Activated CD8-positive, alpha-beta T cell treated with anti-CD3 and anti-CD28 coated beads, Interleukin-2, amount 10 ng/mL, durations not matched to agents 7 days and 5 days (primary cell): ENCODE measurements at regions of chr3 and their contacts with region 1.

Region 1: GRCh38 chr3:66276705-66277274 is 56.0 kb downstream of the SLC25A26 start:
- DNase-seq: peak; percentile 74
- ATAC-seq: no peak
- H3K4me3 Mint-ChIP-seq: no peak overlapping the region
- H3K27ac Mint-ChIP-seq: no peak overlapping the region
- H3K4me1 Mint-ChIP-seq: peaks cover 16% of the 10 kb centered on the region
- H3K27me3 Mint-ChIP-seq: no peaks in the 10 kb centered on the region

Region 2: GRCh38 chr3:66372681-66373350 is 96.0 kb after region 1 on chr3:
- CTCF ChIA-PET with region 1: interaction called, 25 read pairs
- POLR2A ChIA-PET with region 1: interaction called, 3 read pairs
- DNase-seq: no peak
- ATAC-seq: no peak
- H3K4me3 Mint-ChIP-seq: no peak overlapping the region
- H3K27ac Mint-ChIP-seq: no peak overlapping the region
- H3K4me1 Mint-ChIP-seq: peaks cover 2% of the 10 kb centered on the region
- H3K27me3 Mint-ChIP-seq: no peaks in the 10 kb centered on the region

Region 3: DNA sequence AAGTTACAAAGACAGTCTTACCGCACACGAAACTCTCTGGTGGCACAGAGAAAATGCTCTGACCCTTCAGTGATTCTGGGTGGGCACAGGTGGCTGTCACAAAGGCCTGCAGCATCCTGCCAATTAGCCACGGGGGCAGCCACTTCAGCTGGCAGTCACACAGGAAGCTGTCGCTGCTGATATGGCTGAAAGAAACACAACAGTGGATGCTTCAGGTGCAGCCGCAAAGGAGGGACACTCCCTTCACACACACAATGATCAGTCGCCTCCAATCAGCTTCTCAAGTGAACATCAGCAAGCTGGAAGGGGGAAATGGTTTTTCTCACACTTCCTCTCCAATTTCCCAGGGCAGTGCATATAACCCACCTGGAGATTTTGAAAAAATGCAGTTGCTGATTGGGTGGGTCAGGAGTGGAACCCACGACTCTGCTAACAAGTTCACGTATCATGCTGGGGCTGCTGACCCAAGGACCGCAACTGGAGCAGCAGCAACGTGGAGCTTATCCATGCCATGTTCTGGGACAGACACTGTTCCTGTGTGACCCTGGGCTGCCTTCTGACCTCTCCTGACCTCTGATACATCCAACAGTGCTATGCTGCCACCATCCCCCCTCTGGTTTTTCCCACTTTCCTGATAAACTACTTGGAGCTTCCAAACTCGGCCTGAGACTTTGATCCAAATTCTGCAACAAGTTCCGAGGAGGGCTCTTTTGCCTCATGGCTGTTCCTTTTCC is 117.4 kb after region 1 on chr3:
- CTCF ChIA-PET with region 1: interaction called, 14 read pairs
- POLR2A ChIA-PET with region 1: no interaction called
- DNase-seq: peak; percentile 77
- ATAC-seq: peak; percentile 93
- H3K4me3 Mint-ChIP-seq: peak overlapping the region; percentile 67
- H3K27ac Mint-ChIP-seq: peak overlapping the region; percentile 90
- H3K4me1 Mint-ChIP-seq: peaks cover 30% of the 10 kb centered on the region
- H3K27me3 Mint-ChIP-seq: no peaks in the 10 kb centered on the region

Region 4: GRCh38 chr3:66822186-66823008 is 545.6 kb after region 1 on chr3:
- CTCF ChIA-PET with region 1: interaction called, 22 read pairs
- POLR2A ChIA-PET with region 1: no interaction called
- DNase-seq: peak; percentile 75
- ATAC-seq: peak; percentile 75
- H3K4me3 Mint-ChIP-seq: no peak overlapping the region
- H3K27ac Mint-ChIP-seq: no peak overlapping the region
- H3K4me1 Mint-ChIP-seq: no peaks in the 10 kb centered on the region
- H3K27me3 Mint-ChIP-seq: peaks cover 10% of the 10 kb centered on the region